Activated CD4-positive, alpha-beta memory T cell treated with anti-CD3 and anti-CD28 coated beads for 36 hours (primary cell): ENCODE measurements at regions of chr2 and their contacts with region 1.

Region 1: DNA sequence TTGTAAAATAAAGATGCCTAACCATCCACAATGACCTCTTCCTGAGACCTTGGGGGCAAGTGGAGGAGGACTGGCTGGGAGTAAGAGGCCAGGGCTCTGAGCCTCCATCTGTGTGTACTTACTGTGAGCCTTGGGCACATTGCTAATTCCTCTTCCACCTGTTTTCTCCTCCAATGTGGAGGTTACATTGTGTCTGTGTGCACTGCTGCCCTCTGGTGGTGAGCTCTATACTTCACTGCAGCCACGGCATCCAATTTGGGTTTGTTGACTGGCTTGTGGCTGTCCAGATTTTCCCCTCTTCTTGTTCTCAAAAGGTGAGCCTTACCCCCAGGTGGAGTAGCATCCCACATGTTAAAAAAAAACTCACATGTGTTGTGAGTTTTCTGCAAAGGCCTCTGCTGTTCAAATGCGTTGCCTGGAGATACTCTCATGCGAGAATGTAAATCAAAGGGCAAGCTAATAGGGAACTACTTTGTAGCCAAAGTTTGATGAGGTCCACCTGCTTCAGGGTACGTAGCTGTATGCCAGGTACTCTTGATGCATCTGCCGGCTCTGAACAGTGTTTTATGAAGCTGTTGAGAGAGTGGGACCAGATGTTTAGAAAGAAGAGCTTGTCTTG is 80.8 kb downstream of the APOB start:
- DNase-seq: peak; percentile 78
- H3K4me3 Mint-ChIP-seq: no peak overlapping the region
- H3K27ac Mint-ChIP-seq: no peak overlapping the region
- H3K4me1 Mint-ChIP-seq: no peaks in the 10 kb centered on the region
- H3K27me3 Mint-ChIP-seq: peaks cover 10% of the 10 kb centered on the region

Region 2: DNA sequence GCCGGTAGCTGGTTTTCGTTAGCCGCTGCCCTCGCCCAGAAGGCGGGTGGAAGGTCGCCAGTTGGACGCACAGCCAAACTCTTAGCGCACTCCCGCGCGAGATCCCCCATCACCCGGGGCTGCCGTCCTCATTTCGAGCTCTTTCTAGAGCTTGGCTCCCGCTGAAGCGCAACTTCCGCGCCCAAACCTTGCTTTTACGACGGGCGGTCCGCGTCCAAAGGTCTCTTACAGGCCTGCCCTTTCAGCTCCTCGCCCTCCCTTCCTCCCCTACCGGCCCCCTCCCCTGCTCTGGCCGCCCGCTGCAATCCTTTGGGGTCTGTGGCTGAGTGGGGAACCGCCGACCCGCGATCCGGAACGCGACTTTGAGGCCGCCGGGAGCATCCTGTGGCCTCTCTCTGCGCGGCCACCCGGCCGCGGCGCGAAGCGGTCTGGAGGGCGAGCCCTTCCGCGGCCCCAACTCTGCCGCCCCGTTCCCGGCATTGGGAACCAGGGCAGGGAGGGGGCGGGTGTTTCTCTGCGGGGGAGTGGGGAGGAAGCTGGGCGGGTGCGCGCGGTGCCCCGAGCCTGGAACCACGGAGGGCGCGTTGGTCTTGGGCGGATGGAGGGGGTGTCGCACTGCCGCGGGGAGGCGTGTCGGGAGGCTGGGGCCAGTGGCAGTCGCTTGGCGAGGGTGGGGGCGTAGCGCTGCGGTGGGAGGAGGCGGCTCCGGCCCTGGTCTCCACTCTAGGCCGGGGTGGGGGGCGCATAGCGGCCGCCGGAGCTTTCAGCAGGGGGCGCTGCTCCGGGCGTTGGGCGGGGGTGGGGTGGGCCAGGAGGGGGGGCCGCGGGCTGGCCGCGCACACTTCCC is 296.5 kb before region 1 on chr2 and contains the start of gene GDF7:
- CTCF ChIA-PET with region 1: interaction called, 241 read pairs
- POLR2A ChIA-PET with region 1: no interaction called
- intact Hi-C with region 1: loop called (anchors 1 kb)
- DNase-seq: peak; percentile 38
- H3K4me3 Mint-ChIP-seq: peak within 1 kb of the TSS; percentile 65
- H3K27ac Mint-ChIP-seq: no peak within 1 kb of the TSS
- H3K4me1 Mint-ChIP-seq: peaks cover 9% of the 10 kb centered on the region
- H3K27me3 Mint-ChIP-seq: peaks cover 69% of the 10 kb centered on the region
- total RNA-seq, gene GDF7: 0.02 to 0.05 TPM

Region 3: GRCh38 chr2:20675701-20676352 is 287.2 kb before region 1 on chr2:
- CTCF ChIA-PET with region 1: interaction called, 14 read pairs
- POLR2A ChIA-PET with region 1: no interaction called
- intact Hi-C with region 1: no loop called
- DNase-seq: peak; percentile 33
- H3K4me3 Mint-ChIP-seq: no peak overlapping the region
- H3K27ac Mint-ChIP-seq: no peak overlapping the region
- H3K4me1 Mint-ChIP-seq: no peaks in the 10 kb centered on the region
- H3K27me3 Mint-ChIP-seq: peaks cover 16% of the 10 kb centered on the region

Region 4: GRCh38 chr2:20781656-20782265 is 181.3 kb before region 1 on chr2:
- CTCF ChIA-PET with region 1: interaction called, 92 read pairs
- POLR2A ChIA-PET with region 1: interaction called, 7 read pairs
- intact Hi-C with region 1: loop called (anchors 1 kb)
- DNase-seq: peak; percentile 20
- H3K4me3 Mint-ChIP-seq: no peak overlapping the region
- H3K27ac Mint-ChIP-seq: no peak overlapping the region
- H3K4me1 Mint-ChIP-seq: no peaks in the 10 kb centered on the region
- H3K27me3 Mint-ChIP-seq: no peaks in the 10 kb centered on the region

Region 5: DNA sequence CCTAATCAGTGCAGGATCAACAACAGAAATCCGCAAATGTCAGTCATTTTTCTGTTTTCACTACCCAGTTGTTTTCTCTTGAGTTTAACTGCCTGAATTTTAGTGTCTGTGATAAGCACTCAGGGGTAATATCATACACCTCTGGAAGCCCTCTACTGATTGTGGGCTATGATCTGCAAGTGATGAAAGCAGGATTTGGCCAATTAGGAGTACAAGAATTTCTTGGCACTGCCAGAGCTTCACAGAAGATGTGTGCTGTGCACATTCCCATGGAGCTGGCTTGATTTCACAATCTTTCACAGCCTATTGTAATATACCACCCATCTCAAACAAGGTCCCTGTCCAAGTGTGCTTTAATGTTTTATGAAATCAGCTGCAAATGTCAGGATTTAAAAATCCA is 133.4 kb after region 1 on chr2:
- CTCF ChIA-PET with region 1: no interaction called
- POLR2A ChIA-PET with region 1: no interaction called
- intact Hi-C with region 1: no loop called
- DNase-seq: no peak
- H3K4me3 Mint-ChIP-seq: no peak overlapping the region
- H3K27ac Mint-ChIP-seq: no peak overlapping the region
- H3K4me1 Mint-ChIP-seq: no peaks in the 10 kb centered on the region
- H3K27me3 Mint-ChIP-seq: peaks cover under 1% of the 10 kb centered on the region